Endothelial cell of umbilical vein (primary cell): ENCODE measurements at regions of chr3 and their contacts with region 1.

Region 1: GRCh38 chr3:66971891-66972551 is 26.1 kb upstream of the KBTBD8 start:
- DNase-seq: peak; percentile 77
- H3K4me3 ChIP-seq: peak overlapping the region in 2 of 3 experiments; percentile 1 to 46
- H3K27ac ChIP-seq: no peak overlapping the region
- H3K4me1 ChIP-seq: peaks cover 6% of the 10 kb centered on the region
- H3K27me3 ChIP-seq: peaks cover 2 to 4% of the 10 kb centered on the region in 2 experiments
- CTCF ChIP-seq: peak; percentile 82 to 89
- POLR2A ChIP-seq: no peak

Region 2: GRCh38 chr3:66957367-66957766 is 14.7 kb before region 1 on chr3:
- CTCF ChIA-PET with region 1: interaction called, 11 read pairs
- POLR2A ChIA-PET with region 1: no interaction called
- dilution Hi-C with region 1: no loop called
- intact Hi-C with region 1: no loop called
- DNase-seq: no peak
- H3K4me3 ChIP-seq: no peak overlapping the region
- H3K27ac ChIP-seq: no peak overlapping the region
- H3K4me1 ChIP-seq: no peaks in the 10 kb centered on the region
- H3K27me3 ChIP-seq: peaks cover 0 to 11% of the 10 kb centered on the region in 2 experiments
- CTCF ChIP-seq: no peak
- POLR2A ChIP-seq: no peak

Region 3: DNA sequence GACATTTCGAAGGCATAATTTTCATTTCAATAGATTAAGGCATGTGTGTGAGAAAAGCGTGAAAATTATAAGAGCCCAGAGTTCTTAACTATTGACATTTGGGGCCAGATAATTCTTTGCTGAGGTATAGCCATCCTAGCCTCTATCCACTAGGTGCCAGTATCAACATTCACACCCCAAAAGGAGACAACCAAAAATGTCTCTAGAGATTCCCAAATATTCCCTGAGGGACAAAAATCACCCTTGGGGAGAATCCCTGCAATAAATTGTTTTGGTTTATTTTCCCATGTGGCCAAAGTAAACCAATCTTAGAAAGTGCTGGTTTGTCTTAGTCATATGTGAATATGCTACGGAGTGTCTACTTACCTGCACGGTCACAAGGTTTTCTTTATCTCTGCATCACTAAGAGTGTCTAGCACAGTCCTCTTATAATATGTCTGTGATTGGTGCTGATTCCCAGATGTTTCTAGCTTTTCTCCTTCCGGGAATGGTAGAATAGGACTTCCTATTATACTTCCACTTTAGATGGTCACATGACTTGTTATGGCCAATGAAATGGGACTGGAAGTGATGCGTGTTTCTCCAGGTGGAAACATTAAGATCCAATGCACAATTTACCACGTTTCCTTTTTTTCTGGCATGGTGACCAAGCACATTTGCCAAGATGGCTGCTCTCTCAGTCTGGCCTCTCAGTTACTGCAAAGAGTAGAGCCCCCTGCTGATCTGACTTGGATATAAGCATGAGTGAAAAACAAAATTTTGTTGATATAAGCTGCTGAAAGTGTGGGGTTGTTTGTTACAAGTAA is 18.0 kb after region 1 on chr3:
- CTCF ChIA-PET with region 1: interaction called, 15 read pairs
- POLR2A ChIA-PET with region 1: no interaction called
- dilution Hi-C with region 1: no loop called
- intact Hi-C with region 1: no loop called
- DNase-seq: no peak
- H3K4me3 ChIP-seq: no peak overlapping the region
- H3K27ac ChIP-seq: no peak overlapping the region
- H3K4me1 ChIP-seq: no peaks in the 10 kb centered on the region
- H3K27me3 ChIP-seq: peaks cover 0 to 11% of the 10 kb centered on the region in 2 experiments
- CTCF ChIP-seq: no peak
- POLR2A ChIP-seq: no peak

Region 4: DNA sequence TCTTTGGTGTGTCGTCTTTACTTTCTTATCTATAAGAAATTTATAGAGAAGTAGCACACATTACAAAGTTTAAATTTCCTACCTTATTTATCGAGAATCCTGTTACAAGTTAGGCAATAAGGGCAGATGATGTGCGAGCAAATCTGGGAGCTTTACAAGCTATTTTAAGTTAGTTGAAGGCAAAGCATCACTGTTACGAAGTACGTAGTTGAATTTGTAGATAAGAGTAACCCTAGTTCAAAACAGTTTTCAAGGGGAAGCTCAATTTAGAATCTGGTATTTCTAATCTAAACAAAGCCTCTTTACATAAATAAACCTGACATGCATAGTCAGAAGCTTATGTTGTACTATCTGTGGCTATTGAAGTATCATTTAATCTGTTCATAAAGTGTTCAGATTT is 34.4 kb after region 1 on chr3:
- CTCF ChIA-PET with region 1: interaction called, 10 read pairs
- POLR2A ChIA-PET with region 1: no interaction called
- dilution Hi-C with region 1: no loop called
- intact Hi-C with region 1: no loop called
- DNase-seq: no peak
- H3K4me3 ChIP-seq: no peak overlapping the region
- H3K27ac ChIP-seq: no peak overlapping the region
- H3K4me1 ChIP-seq: no peaks in the 10 kb centered on the region
- H3K27me3 ChIP-seq: no peaks in the 10 kb centered on the region
- CTCF ChIP-seq: no peak
- POLR2A ChIP-seq: no peak

Region 5: DNA sequence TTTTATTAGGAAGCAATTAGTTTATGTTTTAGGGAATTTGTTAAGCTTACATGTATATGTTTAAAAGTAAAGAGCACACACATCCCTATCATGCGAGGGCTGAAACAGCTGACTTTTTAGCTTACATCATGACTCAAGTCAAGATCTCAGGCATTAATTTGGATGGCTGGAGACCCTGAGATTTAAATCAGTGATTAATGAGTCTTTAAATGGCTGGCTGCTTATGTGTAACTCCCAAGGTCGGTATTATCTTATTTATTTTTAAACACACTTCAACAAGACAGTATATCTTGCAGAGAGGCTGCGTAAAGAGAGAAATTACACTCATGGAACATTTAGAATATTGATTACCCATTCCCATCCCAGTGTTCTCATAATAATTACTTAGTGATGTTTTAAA is 195.5 kb after region 1 on chr3:
- CTCF ChIA-PET with region 1: no interaction called
- POLR2A ChIA-PET with region 1: no interaction called
- dilution Hi-C with region 1: no loop called
- intact Hi-C with region 1: no loop called
- DNase-seq: no peak
- H3K4me3 ChIP-seq: no peak overlapping the region
- H3K27ac ChIP-seq: no peak overlapping the region
- H3K4me1 ChIP-seq: no peaks in the 10 kb centered on the region
- H3K27me3 ChIP-seq: no peaks in the 10 kb centered on the region
- CTCF ChIP-seq: no peak
- POLR2A ChIP-seq: no peak

Region 6: DNA sequence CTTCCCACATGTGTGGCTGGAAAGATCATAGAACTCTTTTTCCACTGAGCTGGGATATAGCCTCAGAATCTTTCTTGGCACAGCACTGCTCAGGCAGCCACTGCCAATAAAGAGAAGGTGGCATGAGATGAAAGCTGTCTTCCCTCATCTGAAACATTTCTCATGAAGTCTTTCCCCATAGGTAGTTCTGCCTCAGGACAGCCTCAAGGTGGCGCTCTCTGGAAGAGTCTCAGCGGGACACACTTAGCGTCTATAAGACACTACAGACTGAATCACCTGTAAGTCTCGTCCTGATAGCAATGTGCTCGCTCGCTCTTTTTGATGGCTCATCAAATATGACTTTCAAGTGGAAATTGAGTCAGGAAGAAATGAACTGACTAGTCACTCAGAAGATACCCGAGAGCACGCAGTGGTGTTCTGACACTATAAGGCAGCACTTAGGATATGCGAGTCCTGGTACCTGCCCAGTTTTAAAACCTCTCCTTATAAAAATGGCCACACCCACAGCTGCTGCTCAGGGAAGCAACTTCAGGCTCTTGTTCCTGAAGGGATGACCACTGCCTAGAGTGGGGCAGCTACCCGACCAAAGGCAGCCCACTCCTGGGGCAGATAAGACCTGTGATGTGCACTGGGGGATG is 412.9 kb after region 1 on chr3:
- CTCF ChIA-PET with region 1: no interaction called
- POLR2A ChIA-PET with region 1: no interaction called
- dilution Hi-C with region 1: no loop called
- intact Hi-C with region 1: loop called (anchors 10 kb)
- DNase-seq: peak; percentile 45
- H3K4me3 ChIP-seq: no peak overlapping the region
- H3K27ac ChIP-seq: no peak overlapping the region
- H3K4me1 ChIP-seq: no peaks in the 10 kb centered on the region
- H3K27me3 ChIP-seq: no peaks in the 10 kb centered on the region
- CTCF ChIP-seq: peak; percentile 71 to 75
- POLR2A ChIP-seq: no peak

Region 7: GRCh38 chr3:67529337-67529736 is 557.3 kb after region 1 on chr3:
- CTCF ChIA-PET with region 1: no interaction called
- POLR2A ChIA-PET with region 1: no interaction called
- dilution Hi-C with region 1: no loop called
- intact Hi-C with region 1: no loop called
- DNase-seq: no peak
- H3K4me3 ChIP-seq: no peak overlapping the region
- H3K27ac ChIP-seq: no peak overlapping the region
- H3K4me1 ChIP-seq: peaks cover 31% of the 10 kb centered on the region
- H3K27me3 ChIP-seq: no peaks in the 10 kb centered on the region
- CTCF ChIP-seq: no peak
- POLR2A ChIP-seq: no peak

Region 8: DNA sequence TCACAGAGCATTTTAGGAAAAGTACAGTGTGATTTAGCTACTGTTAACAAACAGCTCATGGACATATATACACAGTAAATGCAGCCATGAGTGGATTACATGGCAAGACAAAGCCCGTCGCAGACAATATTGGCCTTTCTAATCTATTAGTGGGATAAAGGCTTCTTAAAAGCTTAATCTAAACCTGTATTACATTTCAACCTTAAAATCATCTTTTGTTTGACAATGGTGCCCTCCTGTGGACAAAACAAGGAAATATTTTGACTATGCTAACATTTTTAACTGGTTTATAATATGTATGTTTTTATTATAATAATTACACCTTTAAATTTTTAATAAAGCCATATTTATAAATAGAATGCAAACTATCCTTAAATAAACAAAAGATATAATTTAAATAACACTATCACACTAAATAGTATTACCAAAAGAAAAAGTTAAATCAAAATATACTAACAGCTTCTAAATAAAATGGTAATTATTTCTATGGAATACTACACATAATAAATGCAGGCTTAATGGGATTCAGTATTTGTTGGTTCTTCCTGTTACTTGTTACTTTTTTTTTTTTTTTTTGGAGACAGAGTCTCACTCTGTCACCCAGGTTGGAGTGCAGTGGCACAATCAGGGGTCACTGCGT is 1921.7 kb after region 1 on chr3:
- CTCF ChIA-PET with region 1: interaction called, 59 read pairs
- POLR2A ChIA-PET with region 1: no interaction called
- dilution Hi-C with region 1: no loop called
- intact Hi-C with region 1: loop called (anchors 1 kb)
- DNase-seq: peak; percentile 63
- H3K4me3 ChIP-seq: no peak overlapping the region
- H3K27ac ChIP-seq: no peak overlapping the region
- H3K4me1 ChIP-seq: no peaks in the 10 kb centered on the region
- H3K27me3 ChIP-seq: peaks cover 4 to 5% of the 10 kb centered on the region in 2 experiments
- CTCF ChIP-seq: peak in 1 of 2 donors; percentile 15
- POLR2A ChIP-seq: no peak